Vagina (tissue), 2 donors: ENCODE measurements at regions of chr6 and their contacts with region 1.

Region 1: DNA sequence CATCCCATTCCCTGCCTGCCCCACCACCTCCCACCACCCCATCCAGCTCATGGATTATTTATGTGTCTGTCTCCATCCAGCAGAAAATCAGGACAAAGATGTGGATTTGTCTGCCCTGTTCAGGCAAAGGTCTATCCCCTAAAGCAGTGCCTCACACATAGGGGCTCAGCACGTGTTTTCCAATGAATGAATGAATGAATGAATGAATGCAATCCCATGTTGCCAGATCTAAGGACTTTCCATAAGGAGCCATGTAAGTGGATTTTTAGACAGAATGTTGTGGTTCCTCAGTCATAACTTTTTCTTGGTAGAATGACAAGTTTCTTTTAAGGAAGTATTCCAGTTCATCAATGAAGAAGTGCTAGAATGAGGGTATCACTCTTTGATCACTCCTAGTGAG is 133.7 kb downstream of the RNASET2 start:
- DNase-seq: no peak
- H3K4me3 ChIP-seq: no peak overlapping the region
- H3K27ac ChIP-seq: no peak overlapping the region
- H3K4me1 ChIP-seq: no peaks in the 10 kb centered on the region
- H3K27me3 ChIP-seq: no peaks in the 10 kb centered on the region
- CTCF ChIP-seq: no peak
- POLR2A ChIP-seq: no peak

Region 2: GRCh38 chr6:166809721-166810120 is 12.9 kb before region 1 on chr6:
- intact Hi-C with region 1: loop called (anchors 2 kb)
- DNase-seq: no peak
- H3K4me3 ChIP-seq: no peak overlapping the region
- H3K27ac ChIP-seq: no peak overlapping the region
- H3K4me1 ChIP-seq: no peaks in the 10 kb centered on the region
- H3K27me3 ChIP-seq: no peaks in the 10 kb centered on the region
- CTCF ChIP-seq: no peak
- POLR2A ChIP-seq: no peak